Activated CD4-positive, alpha-beta T cell treated with anti-CD3 and anti-CD28 coated beads for 36 hours (primary cell): ENCODE measurements at regions of chr12 and their contacts with region 1.

Region 1: DNA sequence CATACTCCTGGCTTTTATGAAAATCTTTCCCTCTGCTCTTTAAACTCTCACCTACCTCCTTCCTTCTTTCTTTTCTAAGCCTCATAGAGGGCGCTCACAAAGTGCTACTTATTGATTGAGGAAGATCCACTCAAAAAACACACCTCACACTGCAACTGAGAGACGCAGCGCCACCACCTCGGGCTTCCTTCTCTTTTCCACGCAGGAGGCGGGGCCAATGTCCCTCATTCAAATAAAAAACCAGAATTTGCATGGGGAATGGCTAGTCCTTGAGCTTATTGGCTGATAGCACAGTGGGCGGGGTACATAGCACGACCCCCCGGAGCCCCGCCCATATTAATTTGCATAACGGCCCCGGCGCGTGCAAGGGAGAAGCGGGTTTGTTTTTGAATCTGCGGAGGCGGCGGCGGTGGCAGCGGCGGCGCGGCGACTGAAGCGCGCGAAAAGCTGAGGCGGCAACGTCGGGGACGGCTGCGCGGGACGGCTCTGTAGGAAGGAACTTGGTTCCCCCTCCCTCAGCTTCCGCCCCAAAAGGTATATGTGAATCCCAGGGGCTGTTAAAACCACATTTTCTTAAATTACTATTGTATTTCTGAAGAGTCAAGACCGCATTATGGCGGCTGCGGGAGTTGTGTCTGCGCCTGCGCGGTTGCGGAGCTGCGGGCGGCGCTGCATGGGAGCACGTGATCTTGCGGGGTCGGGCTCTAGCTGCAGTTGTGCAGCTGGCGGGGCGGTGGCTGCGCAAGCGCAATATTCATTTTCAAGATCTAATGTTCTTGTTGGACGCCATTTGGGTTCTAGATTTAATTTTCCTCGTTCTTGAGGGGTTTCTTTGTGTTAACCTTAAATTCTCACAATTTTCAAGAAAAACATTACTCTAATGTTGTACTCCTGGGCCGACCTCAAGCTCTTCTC is at the start of gene ATF7IP:
- DNase-seq: peak; percentile 97
- ATAC-seq: peak; percentile 85
- H3K4me3 Mint-ChIP-seq: peak within 1 kb of the TSS; percentile 76
- H3K27ac Mint-ChIP-seq: peak within 1 kb of the TSS; percentile 98
- H3K4me1 Mint-ChIP-seq: peaks cover 33% of the 10 kb centered on the region
- H3K27me3 Mint-ChIP-seq: no peaks in the 10 kb centered on the region
- total RNA-seq, gene ATF7IP: 81.3 to 101 TPM

Region 2: GRCh38 chr12:14148489-14149270 is 216.9 kb before region 1 on chr12:
- CTCF ChIA-PET with region 1: no interaction called
- POLR2A ChIA-PET with region 1: no interaction called
- intact Hi-C with region 1: no loop called
- DNase-seq: no peak
- ATAC-seq: no peak
- H3K4me3 Mint-ChIP-seq: no peak overlapping the region
- H3K27ac Mint-ChIP-seq: no peak overlapping the region
- H3K4me1 Mint-ChIP-seq: no peaks in the 10 kb centered on the region
- H3K27me3 Mint-ChIP-seq: peaks cover 4% of the 10 kb centered on the region

Region 3: DNA sequence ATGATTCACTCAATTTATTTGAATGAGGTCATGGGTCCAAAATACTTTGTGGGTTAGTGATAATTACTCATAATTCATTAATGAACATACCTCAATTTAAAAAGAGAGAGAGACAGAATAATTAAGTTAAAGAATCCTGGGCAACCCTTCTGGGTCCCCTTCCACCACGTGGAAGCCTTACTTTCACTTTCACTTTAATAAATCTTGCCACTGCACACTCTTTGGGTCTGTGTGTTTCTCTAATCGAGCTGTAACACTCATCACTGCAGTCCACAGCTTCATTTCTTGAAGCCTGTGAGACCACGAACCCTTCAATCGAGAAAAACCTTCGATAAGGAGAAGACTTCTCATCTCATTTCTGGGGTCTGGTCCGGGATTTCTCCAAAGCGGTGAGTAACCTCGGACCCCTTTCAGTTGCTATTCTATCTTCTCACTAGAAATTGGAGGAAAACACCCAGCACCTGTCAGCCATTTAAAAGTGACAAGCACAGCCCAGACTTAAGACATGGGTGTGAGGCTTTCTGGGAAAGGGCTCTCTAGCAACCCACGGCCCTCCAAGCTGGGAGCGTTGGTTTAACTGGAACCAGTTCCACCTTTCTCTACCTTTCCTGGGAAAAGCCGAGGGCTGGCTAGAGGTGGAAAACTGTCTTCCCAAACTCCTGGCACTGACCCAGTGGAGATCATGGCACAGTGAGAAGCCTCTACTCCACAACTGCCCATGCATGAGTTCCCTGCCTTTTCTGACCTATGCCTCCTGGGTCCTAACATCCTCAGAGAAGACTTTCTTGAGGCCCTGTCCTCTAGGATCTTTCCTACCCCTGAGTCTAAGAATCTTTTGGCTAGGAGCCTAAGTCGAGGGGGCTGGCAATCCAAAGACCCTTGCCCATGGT is 148.9 kb before region 1 on chr12:
- CTCF ChIA-PET with region 1: interaction called, 13 read pairs
- POLR2A ChIA-PET with region 1: interaction called, 14 read pairs
- intact Hi-C with region 1: loop called (anchors 1 kb)
- DNase-seq: no peak
- ATAC-seq: peak; percentile 50
- H3K4me3 Mint-ChIP-seq: peak overlapping the region; percentile 21
- H3K27ac Mint-ChIP-seq: peak overlapping the region; percentile 80
- H3K4me1 Mint-ChIP-seq: peaks cover 27% of the 10 kb centered on the region
- H3K27me3 Mint-ChIP-seq: no peaks in the 10 kb centered on the region

Region 4: DNA sequence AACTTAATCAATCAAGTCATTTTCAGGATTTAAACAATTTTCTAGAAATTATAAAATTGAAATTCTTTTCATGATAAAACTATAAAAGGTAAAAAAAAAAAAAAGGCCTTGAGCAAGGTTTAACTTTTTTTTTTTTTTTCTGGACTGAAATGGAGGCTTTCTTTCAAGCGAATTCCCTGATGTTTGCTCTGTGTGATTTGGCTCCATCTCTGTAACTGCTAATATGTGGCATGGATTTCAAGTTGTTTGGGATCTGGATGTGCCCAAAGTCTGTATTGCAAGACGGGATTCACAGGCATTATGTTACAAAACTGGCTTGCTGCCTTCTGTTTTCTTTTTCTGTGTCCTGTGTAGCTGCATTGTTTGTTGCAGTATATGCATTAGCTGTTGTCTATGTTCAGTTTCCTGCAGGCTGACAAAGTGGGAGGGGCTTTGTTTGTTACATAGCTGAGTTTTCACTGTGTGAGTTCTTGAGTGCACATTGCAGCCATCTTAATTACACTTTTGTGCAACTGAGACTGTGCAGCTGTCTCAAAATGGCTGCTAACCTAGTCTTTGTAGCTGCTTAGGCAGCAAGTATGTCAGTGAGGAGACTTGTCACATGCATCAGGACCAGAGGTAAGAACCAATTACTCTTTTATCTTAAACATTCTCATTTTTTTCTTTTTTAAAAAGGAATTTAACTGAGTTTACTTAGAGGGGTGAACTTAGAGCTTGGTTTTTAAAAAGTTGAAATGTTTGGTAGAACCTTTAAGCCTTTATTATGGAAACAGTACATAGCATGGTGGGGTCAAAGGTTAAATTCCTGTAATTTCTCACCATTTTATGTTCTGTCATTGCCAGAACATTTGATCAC is 19.5 kb after region 1 on chr12:
- CTCF ChIA-PET with region 1: interaction called, 36 read pairs
- POLR2A ChIA-PET with region 1: interaction called, 27 read pairs
- intact Hi-C with region 1: loop called (anchors 1 kb)
- DNase-seq: peak; percentile 75
- ATAC-seq: peak; percentile 96
- H3K4me3 Mint-ChIP-seq: peak overlapping the region; percentile 73
- H3K27ac Mint-ChIP-seq: peak overlapping the region; percentile 94
- H3K4me1 Mint-ChIP-seq: peaks cover 59% of the 10 kb centered on the region
- H3K27me3 Mint-ChIP-seq: no peaks in the 10 kb centered on the region

Region 5: GRCh38 chr12:14417715-14418114 is 52.2 kb after region 1 on chr12:
- CTCF ChIA-PET with region 1: interaction called, 19 read pairs
- POLR2A ChIA-PET with region 1: interaction called, 13 read pairs
- intact Hi-C with region 1: loop called (anchors 1 kb)
- DNase-seq: peak; percentile 86
- ATAC-seq: peak; percentile 76
- H3K4me3 Mint-ChIP-seq: peak overlapping the region; percentile 56
- H3K27ac Mint-ChIP-seq: peak overlapping the region; percentile 92
- H3K4me1 Mint-ChIP-seq: peaks cover 59% of the 10 kb centered on the region
- H3K27me3 Mint-ChIP-seq: no peaks in the 10 kb centered on the region

Region 6: GRCh38 chr12:14618983-14619382 is 253.4 kb after region 1 on chr12:
- CTCF ChIA-PET with region 1: no interaction called
- POLR2A ChIA-PET with region 1: no interaction called
- intact Hi-C with region 1: loop called in 1 of 2 experiments (anchors 5 kb)
- DNase-seq: no peak
- ATAC-seq: peak; percentile 33
- H3K4me3 Mint-ChIP-seq: no peak overlapping the region
- H3K27ac Mint-ChIP-seq: no peak overlapping the region
- H3K4me1 Mint-ChIP-seq: no peaks in the 10 kb centered on the region
- H3K27me3 Mint-ChIP-seq: peaks cover 8% of the 10 kb centered on the region